Heart left ventricle (tissue), 16 donors: ENCODE measurements at regions of chr10 and their contacts with region 1.

Region 1: GRCh38 chr10:24541239-24542048 is 182.2 kb downstream of the ARHGAP21 start:
- DNase-seq: no peak
- ATAC-seq: peak in 1 of 4 donors; percentile 15
- H3K4me3 ChIP-seq: no peak overlapping the region
- H3K27ac ChIP-seq: no peak overlapping the region
- H3K4me1 ChIP-seq: no peaks in the 10 kb centered on the region
- H3K27me3 ChIP-seq: no peaks in the 10 kb centered on the region
- CTCF ChIP-seq: no peak
- POLR2A ChIP-seq: no peak

Region 2: DNA sequence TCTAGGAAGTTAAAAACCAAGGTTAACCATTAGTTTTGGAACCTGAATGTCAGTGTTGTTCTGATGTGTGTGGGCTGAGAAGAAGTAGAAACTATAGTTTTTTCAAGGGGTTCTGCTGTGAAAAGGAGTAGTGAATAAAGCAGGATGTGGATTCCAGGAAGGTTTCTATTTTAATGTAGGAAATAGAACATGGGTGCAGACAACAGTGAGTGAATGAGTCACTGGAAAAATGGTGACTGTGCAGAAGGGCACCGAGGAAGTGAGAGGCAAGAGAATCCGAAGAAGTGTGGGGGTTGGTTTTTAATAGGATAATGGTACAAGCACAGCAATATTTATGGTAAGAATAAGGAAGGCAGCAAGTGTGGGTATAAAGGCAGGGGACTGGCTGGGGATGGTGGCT is 61.9 kb after region 1 on chr10:
- intact Hi-C with region 1: loop called in 1 of 10 experiments (anchors 10 kb)
- DNase-seq: no peak
- ATAC-seq: peak in 2 of 4 donors; percentile 36 to 71
- H3K4me3 ChIP-seq: no peak overlapping the region
- H3K27ac ChIP-seq: peak overlapping the region in 1 of 12 donors; percentile 34
- H3K4me1 ChIP-seq: peaks cover 0 to 11% (median 0%) of the 10 kb centered on the region in 12 donors
- H3K27me3 ChIP-seq: no peaks in the 10 kb centered on the region
- CTCF ChIP-seq: no peak
- POLR2A ChIP-seq: no peak